Posterior vena cava (tissue), 2 donors: ENCODE measurements at regions of chr20 and their contacts with region 1.

Region 1: DNA sequence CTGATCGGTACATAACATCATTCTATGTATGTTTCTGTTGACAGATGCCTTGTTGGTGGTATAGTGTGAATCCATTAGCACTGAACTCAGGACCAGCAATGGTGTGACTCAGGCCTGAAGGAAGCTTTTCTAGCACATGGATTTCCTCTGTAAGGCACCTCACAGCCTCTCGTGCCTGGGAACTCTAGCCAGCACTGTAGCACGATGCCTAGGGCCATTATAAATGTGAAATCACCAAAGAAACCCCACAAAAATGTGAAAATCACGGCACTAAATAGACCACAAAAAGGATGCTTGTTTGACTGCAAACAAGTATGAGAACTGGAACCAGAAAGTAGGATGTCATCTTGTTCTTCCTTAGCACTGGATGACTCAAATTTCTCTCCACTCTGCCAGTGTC is 63.7 kb upstream of the NKX2-2 start:
- DNase-seq: no peak

Region 2: DNA sequence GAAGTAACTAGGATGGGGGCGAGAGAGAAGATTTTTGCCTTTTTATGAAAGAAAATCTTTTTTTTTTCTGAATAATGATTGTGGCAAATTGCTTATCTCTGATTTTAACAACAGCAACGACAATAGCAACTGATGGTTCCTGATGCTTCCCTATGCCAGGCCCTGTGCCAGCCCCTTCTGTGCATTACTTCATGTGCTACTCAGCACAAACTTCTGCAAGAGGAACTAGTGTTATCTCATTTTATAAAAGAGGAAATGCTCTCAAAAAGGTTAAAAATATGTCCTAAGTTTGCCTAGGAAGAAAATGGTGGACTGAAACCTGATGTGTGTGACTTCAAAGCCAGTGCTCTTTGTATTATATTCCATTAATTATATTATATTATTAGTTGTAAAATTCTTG is 791.1 kb before region 1 on chr20:
- intact Hi-C with region 1: loop called in 1 of 2 experiments (anchors 5 kb)
- DNase-seq: no peak

Region 3: DNA sequence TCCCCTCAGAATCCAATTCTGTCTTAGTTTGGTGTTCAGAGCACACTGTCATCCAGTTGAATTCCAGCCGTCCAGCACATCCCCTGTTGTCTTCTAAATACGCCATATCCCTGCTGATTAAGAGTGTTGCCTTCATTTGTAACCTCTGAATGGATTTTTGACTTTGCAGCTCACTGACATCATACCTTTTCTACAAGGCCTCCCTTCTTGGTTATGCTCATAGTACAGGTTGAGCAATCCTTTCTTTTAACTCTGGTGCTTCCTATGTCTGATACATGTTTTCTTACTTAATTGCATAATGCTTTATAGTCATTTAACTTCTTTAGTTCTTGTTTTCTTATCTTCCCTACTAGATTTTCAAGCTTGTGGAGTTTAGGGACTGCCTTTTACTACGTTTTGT is 238.1 kb before region 1 on chr20:
- intact Hi-C with region 1: no loop called
- DNase-seq: no peak